Adrenal gland (tissue), 19 donors: ENCODE measurements at regions of chr15 and their contacts with region 1.

Region 1: DNA sequence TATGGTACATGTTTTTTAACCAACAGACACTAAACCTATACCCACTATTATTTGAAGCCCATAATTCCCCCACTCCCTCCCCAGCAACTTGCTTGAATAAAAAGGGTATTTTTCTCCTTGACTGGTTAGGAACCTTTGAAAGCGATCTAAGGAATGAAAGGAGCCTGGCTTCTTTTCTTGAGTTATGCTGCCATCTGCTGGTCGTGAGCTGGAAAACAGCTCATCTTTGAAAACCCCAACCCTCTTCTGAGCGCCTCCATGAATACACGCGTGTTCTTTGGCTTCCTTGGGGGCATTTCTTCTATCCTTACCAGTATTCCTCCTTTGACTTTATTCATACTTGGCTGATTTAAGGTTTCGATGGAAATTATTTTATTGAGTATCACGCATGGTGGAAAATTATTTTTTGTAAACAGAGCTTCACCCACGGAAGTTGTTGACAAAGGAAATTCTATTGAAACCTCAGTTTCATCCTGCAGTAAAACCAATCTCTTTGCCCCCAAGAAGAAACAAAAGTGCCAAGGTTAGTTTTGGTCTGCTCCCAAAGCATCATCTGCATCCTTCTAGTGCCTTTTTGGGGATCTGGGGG is 171.6 kb downstream of the SV2B start:
- DNase-seq: peak in 6 of 7 donors; percentile 47 to 82 (median 63)
- H3K4me3 ChIP-seq: no peak overlapping the region
- H3K27ac ChIP-seq: no peak overlapping the region
- H3K4me1 ChIP-seq: no peaks in the 10 kb centered on the region
- H3K27me3 ChIP-seq: no peaks in the 10 kb centered on the region
- CTCF ChIP-seq: peak; percentile 63 to 84 (median 80)
- POLR2A ChIP-seq: no peak

Region 2: GRCh38 chr15:91055548-91056331 is 215.9 kb before region 1 on chr15:
- intact Hi-C with region 1: loop called (anchors 2 to 5 kb)
- DNase-seq: peak; percentile 69 to 87 (median 78)
- H3K4me3 ChIP-seq: no peak overlapping the region
- H3K27ac ChIP-seq: no peak overlapping the region
- H3K4me1 ChIP-seq: no peaks in the 10 kb centered on the region
- H3K27me3 ChIP-seq: peaks cover 20% of the 10 kb centered on the region
- CTCF ChIP-seq: peak; percentile 62 to 87 (median 80)
- POLR2A ChIP-seq: no peak

Region 3: GRCh38 chr15:91224755-91225380 is 46.8 kb before region 1 on chr15:
- intact Hi-C with region 1: loop called in 1 of 2 experiments (anchors 10 kb)
- DNase-seq: peak in 3 of 7 donors; percentile 23 to 36 (median 24)
- H3K4me3 ChIP-seq: no peak overlapping the region
- H3K27ac ChIP-seq: no peak overlapping the region
- H3K4me1 ChIP-seq: no peaks in the 10 kb centered on the region
- H3K27me3 ChIP-seq: peaks cover 12% of the 10 kb centered on the region
- CTCF ChIP-seq: peak; percentile 54 to 76 (median 70)
- POLR2A ChIP-seq: no peak